WTC11 (cell line): ENCODE measurements at regions of chr22 and their contacts with region 1.

Region 1: DNA sequence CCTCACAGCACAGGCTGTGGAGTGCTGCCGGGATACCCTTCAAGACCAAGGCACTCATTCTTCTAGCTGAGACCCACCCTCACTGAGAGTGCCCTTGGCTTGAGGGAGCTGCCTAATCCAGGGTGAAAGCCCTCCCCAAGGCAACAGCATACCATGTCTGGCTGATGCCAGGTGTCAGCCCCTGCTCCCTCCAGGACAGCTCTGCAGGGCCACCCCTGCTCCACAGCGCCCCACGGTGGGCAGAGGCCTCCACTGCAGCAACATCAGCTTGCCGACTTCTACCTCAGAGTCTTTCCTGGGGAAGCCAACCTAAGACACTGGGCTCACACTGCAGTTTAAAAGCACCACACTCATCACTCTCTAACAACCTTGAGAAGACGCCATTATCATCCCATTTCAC is 29.0 kb downstream of the TTLL1 start:
- DNase-seq: peak; percentile 91
- ATAC-seq: peak; percentile 98
- H3K4me3 Mint-ChIP-seq: no peak overlapping the region
- H3K27ac Mint-ChIP-seq: peak overlapping the region; percentile 69; the same call in 1 of the 2 replicates
- H3K4me1 Mint-ChIP-seq: no peaks in the 10 kb centered on the region
- H3K27me3 Mint-ChIP-seq: no peaks in the 10 kb centered on the region
- CTCF ChIP-seq: peak; percentile 98

Region 2: DNA sequence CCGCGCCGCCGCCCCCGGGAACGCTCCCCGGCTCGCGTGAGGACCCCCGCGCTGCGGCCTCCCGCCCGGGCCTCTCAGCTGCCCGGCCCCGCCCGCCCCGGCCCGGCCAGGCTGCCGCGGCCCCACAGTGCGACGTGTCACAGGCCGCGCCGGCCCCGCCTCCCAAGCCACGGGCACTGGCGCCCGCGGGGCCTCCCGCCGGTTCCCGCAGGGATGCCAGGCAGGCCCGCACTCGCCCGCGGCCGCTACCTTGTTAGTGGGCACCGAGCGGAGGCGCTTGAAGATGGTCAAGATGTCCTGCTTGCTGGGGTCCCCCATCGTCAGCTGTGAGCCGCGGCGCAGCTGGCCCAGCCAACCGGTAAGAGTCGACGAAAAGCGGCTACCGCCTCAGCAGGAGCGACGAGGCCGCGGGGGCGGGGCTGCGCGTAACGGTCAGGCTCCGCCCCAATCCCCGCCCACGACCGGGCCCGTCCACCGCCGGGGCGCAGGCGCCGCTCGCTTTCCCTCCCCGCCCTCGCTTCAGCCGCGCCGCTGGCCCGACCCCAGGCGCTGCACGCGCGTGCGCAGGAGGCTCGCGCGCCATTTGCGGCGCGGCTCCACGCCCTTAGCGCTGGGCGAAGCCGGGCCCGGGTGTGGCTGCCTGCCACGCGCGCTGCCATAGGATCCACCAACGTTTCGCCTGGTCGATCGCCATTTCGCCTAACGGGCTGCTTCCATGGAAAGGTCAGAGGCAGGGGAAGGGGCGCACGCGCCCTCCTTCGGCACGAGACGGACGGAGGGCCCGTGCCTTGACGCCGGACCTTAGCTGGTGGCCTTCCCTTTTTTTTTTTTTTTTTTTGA is 203.1 kb before region 1 on chr22 and contains the start of gene ARFGAP3:
- CTCF ChIA-PET with region 1: interaction called, 13 read pairs
- POLR2A ChIA-PET with region 1: interaction called, 4 read pairs
- DNase-seq: peak; percentile 94
- ATAC-seq: peak; percentile 97
- H3K4me3 Mint-ChIP-seq: peak within 1 kb of the TSS; percentile 84
- H3K27ac Mint-ChIP-seq: no peak within 1 kb of the TSS
- H3K4me1 Mint-ChIP-seq: peaks cover 4% of the 10 kb centered on the region; the same call in 1 of the 2 replicates
- H3K27me3 Mint-ChIP-seq: peaks cover 44% of the 10 kb centered on the region
- CTCF ChIP-seq: no peak
- total RNA-seq, gene ARFGAP3: 16.9 to 17.1 TPM (median 17.1 TPM) in 3 replicates

Region 3: GRCh38 chr22:42915980-42916765 is 144.0 kb before region 1 on chr22:
- CTCF ChIA-PET with region 1: interaction called, 13 read pairs
- POLR2A ChIA-PET with region 1: no interaction called
- DNase-seq: peak; percentile 42
- ATAC-seq: peak; percentile 87
- H3K4me3 Mint-ChIP-seq: no peak overlapping the region
- H3K27ac Mint-ChIP-seq: peak overlapping the region; percentile 92
- H3K4me1 Mint-ChIP-seq: peaks cover 38% of the 10 kb centered on the region
- H3K27me3 Mint-ChIP-seq: no peaks in the 10 kb centered on the region
- CTCF ChIP-seq: no peak

Region 4: GRCh38 chr22:43177479-43177878 is 117.3 kb after region 1 on chr22:
- CTCF ChIA-PET with region 1: no interaction called
- POLR2A ChIA-PET with region 1: no interaction called
- DNase-seq: no peak
- ATAC-seq: no peak
- H3K4me3 Mint-ChIP-seq: no peak overlapping the region
- H3K27ac Mint-ChIP-seq: no peak overlapping the region
- H3K4me1 Mint-ChIP-seq: no peaks in the 10 kb centered on the region
- H3K27me3 Mint-ChIP-seq: no peaks in the 10 kb centered on the region
- CTCF ChIP-seq: no peak

Region 5: GRCh38 chr22:43515902-43516301 is 455.7 kb after region 1 on chr22:
- CTCF ChIA-PET with region 1: no interaction called
- POLR2A ChIA-PET with region 1: no interaction called
- DNase-seq: peak; percentile 82
- ATAC-seq: peak; percentile 87
- H3K4me3 Mint-ChIP-seq: no peak overlapping the region
- H3K27ac Mint-ChIP-seq: no peak overlapping the region
- H3K4me1 Mint-ChIP-seq: no peaks in the 10 kb centered on the region
- H3K27me3 Mint-ChIP-seq: 0 out of 2 replicates have a peak, but pooled peaks cover 3% of the 10 kb centered on the region
- CTCF ChIP-seq: peak; percentile 51